Ascending aorta (tissue), 2 donors: ENCODE measurements at regions of chr6 and their contacts with region 1.

Region 1: DNA sequence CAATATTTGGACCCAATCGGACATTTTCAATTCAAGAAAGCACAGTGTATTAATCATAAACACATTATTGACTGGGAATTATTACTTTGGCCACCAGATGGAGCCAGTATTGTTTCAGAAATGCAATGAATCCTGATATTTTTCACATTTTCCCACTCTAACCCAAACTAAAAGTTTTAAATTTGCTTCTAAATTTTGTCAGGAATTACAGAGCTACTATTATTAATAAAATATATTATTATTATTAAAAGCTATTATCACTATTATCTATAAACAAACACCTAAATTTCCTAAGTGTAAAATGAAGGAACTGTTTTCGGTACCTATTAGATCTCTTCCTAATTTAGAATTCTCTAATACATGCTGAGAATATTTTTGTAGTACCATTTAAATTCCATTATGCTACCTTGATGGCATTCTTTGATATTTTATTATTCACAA is 245.3 kb downstream of the OGFRL1 start:
- DNase-seq: no peak
- H3K4me3 ChIP-seq: no peak overlapping the region
- H3K27ac ChIP-seq: no peak overlapping the region
- H3K4me1 ChIP-seq: peaks cover 0 to 3% of the 10 kb centered on the region in 2 donors
- H3K27me3 ChIP-seq: no peaks in the 10 kb centered on the region
- CTCF ChIP-seq: peak; percentile 21 to 73 (median 66)

Region 2: GRCh38 chr6:71114986-71115385 is 419.0 kb before region 1 on chr6:
- intact Hi-C with region 1: no loop called
- DNase-seq: no peak
- H3K4me3 ChIP-seq: no peak overlapping the region
- H3K27ac ChIP-seq: no peak overlapping the region
- H3K4me1 ChIP-seq: no peaks in the 10 kb centered on the region
- H3K27me3 ChIP-seq: no peaks in the 10 kb centered on the region
- CTCF ChIP-seq: no peak

Region 3: GRCh38 chr6:71727632-71728294 is 193.8 kb after region 1 on chr6:
- intact Hi-C with region 1: loop called (anchors 10 kb)
- DNase-seq: no peak
- H3K4me3 ChIP-seq: no peak overlapping the region
- H3K27ac ChIP-seq: no peak overlapping the region
- H3K4me1 ChIP-seq: peaks cover 0 to 13% of the 10 kb centered on the region in 2 donors
- H3K27me3 ChIP-seq: no peaks in the 10 kb centered on the region
- CTCF ChIP-seq: no peak

Region 4: DNA sequence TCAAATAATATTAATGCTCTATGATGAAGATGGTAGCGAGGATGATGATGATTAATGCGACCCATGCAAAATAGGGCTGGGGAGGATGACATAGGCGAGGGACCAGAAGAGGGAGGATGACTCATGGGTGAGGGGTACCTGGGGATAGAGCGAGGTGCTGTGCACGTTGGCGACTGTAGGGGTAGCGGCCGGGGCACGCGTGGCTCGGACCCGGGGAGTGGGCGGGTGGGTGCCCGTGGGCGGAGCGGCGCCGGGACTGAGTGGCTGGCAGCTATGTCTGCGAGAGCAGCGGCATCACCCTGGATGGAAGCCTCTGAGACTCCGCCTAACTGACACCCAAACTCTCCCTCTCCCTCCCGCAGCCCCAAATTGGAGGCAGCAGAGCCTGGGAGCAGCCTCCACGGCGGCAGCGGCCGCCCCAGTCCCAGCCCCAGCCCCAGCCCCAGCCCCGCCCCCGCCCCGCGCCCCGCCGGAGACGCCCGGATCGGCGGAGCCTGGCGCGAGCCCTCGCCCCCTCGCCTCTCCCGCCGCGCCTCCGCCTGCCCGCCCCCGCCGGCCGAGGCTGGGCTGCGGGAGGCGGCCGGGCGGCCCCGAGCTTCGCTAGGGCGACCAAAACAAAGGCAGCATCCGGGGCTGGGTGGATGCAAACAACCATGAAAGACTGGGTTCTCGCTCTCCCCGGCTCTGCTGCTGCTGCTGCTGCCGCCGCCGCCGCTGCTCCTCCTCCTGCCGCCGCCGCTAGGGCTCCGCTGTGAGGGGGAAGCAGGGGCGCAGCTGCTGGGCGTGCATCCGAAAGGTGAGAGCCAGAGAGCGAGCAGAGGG is 352.4 kb after region 1 on chr6 and contains the start of gene RIMS1:
- intact Hi-C with region 1: loop called (anchors 10 kb)
- DNase-seq: no peak
- H3K4me3 ChIP-seq: peak within 1 kb of the TSS; percentile 63 to 70
- H3K27ac ChIP-seq: no peak within 1 kb of the TSS
- H3K4me1 ChIP-seq: peaks cover 0 to 3% of the 10 kb centered on the region in 2 donors
- H3K27me3 ChIP-seq: no peaks in the 10 kb centered on the region
- CTCF ChIP-seq: no peak
- total RNA-seq, gene RIMS1: not detected

Region 5: DNA sequence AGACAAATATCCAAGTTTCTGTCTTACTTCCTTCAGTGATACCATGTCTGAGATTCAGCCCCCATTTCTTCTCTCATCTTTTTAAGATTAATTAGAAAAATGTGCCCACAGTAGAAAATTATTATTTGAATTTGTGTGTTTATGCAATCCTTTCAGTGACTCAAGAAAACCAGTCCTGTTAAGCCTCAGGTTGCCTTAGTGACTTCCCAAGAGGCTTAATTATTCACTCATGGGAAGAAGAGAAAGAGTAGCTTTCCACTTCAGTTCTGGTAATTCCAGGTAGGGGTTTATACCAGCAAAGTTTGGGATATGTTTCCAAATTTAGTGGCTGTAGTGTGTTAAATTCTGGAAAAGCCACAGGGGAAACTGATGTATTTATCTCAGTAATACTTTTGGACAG is 501.5 kb after region 1 on chr6:
- intact Hi-C with region 1: loop called (anchors 5 kb)
- DNase-seq: no peak
- H3K4me3 ChIP-seq: no peak overlapping the region
- H3K27ac ChIP-seq: no peak overlapping the region
- H3K4me1 ChIP-seq: no peaks in the 10 kb centered on the region
- H3K27me3 ChIP-seq: no peaks in the 10 kb centered on the region
- CTCF ChIP-seq: no peak

Region 6: DNA sequence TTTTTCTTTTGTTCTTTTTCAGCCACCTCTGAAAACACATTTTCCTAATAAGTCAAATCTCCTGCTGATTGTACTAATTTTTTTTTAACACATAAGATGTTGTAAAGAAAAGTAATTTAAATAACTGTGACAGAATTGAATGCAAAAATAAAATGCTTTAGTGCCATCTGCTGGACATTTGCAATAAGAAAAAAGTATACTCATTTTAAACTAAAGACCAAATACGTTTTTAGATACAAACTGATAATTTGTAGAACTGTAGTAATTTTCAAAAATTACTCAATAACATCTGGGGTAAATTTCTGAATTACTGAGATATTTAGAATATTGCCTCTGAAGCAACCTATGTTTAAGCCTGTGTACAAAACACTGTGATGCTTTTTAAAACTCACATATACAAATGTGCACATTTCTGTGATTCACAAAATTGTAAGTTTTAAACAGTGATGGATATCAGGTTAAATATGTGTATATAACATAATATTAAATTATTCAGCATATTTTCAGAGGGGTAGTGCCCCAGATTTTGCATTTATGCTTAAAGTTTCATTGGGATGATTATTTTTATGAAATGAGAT is 551.1 kb after region 1 on chr6:
- intact Hi-C with region 1: loop called (anchors 2 kb)
- DNase-seq: no peak
- H3K4me3 ChIP-seq: no peak overlapping the region
- H3K27ac ChIP-seq: no peak overlapping the region
- H3K4me1 ChIP-seq: no peaks in the 10 kb centered on the region
- H3K27me3 ChIP-seq: no peaks in the 10 kb centered on the region
- CTCF ChIP-seq: peak in 2 of 3 experiments; percentile 36 to 60